ENCODE measurements at regions of chr7 and their contacts with region 1.

Region 1: DNA sequence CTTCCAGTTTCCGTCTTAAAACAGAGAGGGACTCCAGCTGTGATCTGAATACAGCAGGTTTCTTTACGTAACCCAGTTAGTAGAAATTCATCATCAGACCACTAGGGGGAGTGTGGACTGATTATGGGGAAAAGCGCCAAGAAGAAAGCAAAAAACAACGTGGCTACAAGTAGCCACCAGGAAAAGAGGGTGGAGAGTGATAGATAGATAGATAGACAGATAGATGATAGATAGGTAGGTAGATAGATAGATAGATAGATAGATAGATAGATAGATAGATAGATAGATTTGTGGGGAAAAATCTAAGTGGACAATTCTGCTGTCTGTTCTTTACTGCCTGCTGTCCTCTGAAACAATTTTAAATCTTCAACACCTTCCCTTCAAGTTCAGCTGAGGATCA is 12.7 kb upstream of the AKR1B10 start:
- DNase-seq: peak in 1 of 2 donors; percentile 41
- ATAC-seq: peak in 6 of 8 donors; percentile 23 to 71 (median 62)
- H3K4me3 ChIP-seq: no peak overlapping the region
- H3K27ac ChIP-seq: no peak overlapping the region
- H3K4me1 ChIP-seq: peaks cover 0 to 18% (median 4%) of the 10 kb centered on the region in 9 donors
- H3K27me3 ChIP-seq: peaks cover 0 to 9% (median 0%) of the 10 kb centered on the region in 7 donors
- CTCF ChIP-seq: peak; percentile 66 to 84 (median 78)

Region 2: GRCh38 chr7:133827707-133828623 is 686.7 kb before region 1 on chr7:
- intact Hi-C with region 1: no loop called
- DNase-seq: no peak
- ATAC-seq: peak in 6 of 8 donors; percentile 69 to 76 (median 74)
- H3K4me3 ChIP-seq: no peak overlapping the region
- H3K27ac ChIP-seq: no peak overlapping the region
- H3K4me1 ChIP-seq: peaks cover 0 to 19% (median 5%) of the 10 kb centered on the region in 9 donors
- H3K27me3 ChIP-seq: no peaks in the 10 kb centered on the region
- CTCF ChIP-seq: no peak

Region 3: DNA sequence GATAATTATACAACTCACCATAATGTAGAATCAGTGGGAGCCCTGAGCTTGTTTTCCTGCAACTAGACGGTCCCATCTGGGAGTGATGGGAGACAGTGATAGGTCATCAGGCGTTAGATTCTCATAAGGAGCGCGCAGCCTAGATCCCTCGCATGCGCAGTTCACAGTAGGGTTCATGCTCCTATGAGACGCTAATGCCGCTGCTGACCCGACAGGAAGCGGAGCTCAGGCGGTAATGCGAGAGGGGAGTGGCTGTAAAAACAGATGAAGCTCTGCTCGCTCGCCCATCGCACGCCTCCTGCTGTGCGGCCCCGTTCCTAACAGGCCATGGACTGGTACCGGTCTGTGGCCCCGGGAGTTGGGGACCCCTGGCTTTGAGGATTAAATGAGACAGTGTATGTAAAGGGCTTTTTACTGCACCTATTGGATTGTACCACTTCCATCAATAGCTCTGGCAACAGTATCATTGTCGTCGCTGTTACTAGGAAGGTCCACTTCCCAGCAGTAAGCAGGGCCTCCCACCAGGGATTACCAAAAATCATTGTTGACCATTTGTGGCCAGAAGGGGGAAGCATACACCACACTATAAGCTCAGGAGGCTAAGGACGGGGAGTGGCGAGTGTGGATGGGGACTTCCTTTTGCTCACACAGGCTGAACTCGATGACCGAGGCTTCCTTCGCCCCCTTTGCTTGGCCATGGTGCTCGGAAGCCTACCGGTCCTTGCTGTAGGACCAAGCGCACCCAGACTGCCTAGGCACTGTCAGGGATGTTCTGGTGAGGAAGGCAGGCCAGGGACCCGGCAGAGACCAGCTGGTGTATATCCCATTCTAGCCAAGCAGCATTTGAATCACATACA is 82.1 kb before region 1 on chr7:
- intact Hi-C with region 1: loop called (anchors 1 to 2 kb)
- DNase-seq: peak; percentile 82 to 87
- ATAC-seq: peak; percentile 97 to 99 (median 98)
- H3K4me3 ChIP-seq: peak overlapping the region in 9 of 10 donors; percentile 20 to 59 (median 45)
- H3K27ac ChIP-seq: peak overlapping the region; percentile 11 to 87 (median 80)
- H3K4me1 ChIP-seq: peaks cover 0 to 17% (median 6%) of the 10 kb centered on the region in 9 donors
- H3K27me3 ChIP-seq: no peaks in the 10 kb centered on the region
- CTCF ChIP-seq: peak; percentile 29 to 88 (median 79)

Region 4: DNA sequence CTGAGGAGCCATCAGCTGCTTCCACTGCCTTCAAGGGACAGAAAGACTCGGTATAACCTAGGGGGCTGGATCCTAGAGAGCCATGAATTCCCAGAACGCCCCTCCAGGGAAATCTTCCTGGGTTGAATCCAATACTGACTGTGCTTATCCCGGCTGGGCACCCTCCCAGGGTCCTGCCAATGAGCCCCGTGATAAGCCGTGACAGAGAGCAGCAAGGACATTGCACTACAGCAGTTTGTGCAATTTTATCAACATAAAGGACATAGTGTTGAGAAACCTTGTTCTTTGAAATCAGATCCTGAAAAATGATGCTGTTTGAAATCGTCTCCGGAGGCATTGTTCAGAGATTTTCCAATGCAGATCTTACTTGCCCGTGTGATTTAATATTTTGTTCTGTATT is 74.6 kb before region 1 on chr7:
- intact Hi-C with region 1: loop called in 2 of 10 experiments (anchors 2 kb)
- DNase-seq: peak in 1 of 2 donors; percentile 37
- ATAC-seq: peak in 7 of 8 donors; percentile 17 to 68 (median 58)
- H3K4me3 ChIP-seq: no peak overlapping the region
- H3K27ac ChIP-seq: peak overlapping the region in 2 of 10 donors; percentile 5 to 17
- H3K4me1 ChIP-seq: peaks cover 0 to 21% (median 13%) of the 10 kb centered on the region in 9 donors
- H3K27me3 ChIP-seq: no peaks in the 10 kb centered on the region
- CTCF ChIP-seq: no peak